ENCODE measurements at regions of chr7 and their contacts with region 1.

Region 1: GRCh38 chr7:15291702-15292101 is 270.1 kb downstream of the AGMO start:
- DNase-seq: no peak
- ATAC-seq: no peak
- H3K4me3 ChIP-seq: no peak overlapping the region
- H3K27ac ChIP-seq: no peak overlapping the region
- H3K4me1 ChIP-seq: peaks cover 0 to 7% (median 0%) of the 10 kb centered on the region in 12 donors
- H3K27me3 ChIP-seq: no peaks in the 10 kb centered on the region
- CTCF ChIP-seq: peak in 1 of 12 donors; percentile 8
- POLR2A ChIP-seq: no peak

Region 2: GRCh38 chr7:15418264-15418663 is 126.6 kb after region 1 on chr7:
- intact Hi-C with region 1: no loop called
- DNase-seq: no peak
- ATAC-seq: no peak
- H3K4me3 ChIP-seq: no peak overlapping the region
- H3K27ac ChIP-seq: no peak overlapping the region
- H3K4me1 ChIP-seq: no peaks in the 10 kb centered on the region
- H3K27me3 ChIP-seq: no peaks in the 10 kb centered on the region
- CTCF ChIP-seq: no peak
- POLR2A ChIP-seq: no peak

Region 3: GRCh38 chr7:16579216-16579615 is 1287.5 kb after region 1 on chr7:
- intact Hi-C with region 1: loop called in 1 of 10 experiments (anchors 10 kb)
- DNase-seq: no peak
- ATAC-seq: no peak
- H3K4me3 ChIP-seq: no peak overlapping the region
- H3K27ac ChIP-seq: no peak overlapping the region
- H3K4me1 ChIP-seq: peaks cover 0 to 7% (median 0%) of the 10 kb centered on the region in 12 donors
- H3K27me3 ChIP-seq: no peaks in the 10 kb centered on the region
- CTCF ChIP-seq: no peak
- POLR2A ChIP-seq: no peak